ENCODE measurements at regions of chr10 and their contacts with region 1.

Region 1: DNA sequence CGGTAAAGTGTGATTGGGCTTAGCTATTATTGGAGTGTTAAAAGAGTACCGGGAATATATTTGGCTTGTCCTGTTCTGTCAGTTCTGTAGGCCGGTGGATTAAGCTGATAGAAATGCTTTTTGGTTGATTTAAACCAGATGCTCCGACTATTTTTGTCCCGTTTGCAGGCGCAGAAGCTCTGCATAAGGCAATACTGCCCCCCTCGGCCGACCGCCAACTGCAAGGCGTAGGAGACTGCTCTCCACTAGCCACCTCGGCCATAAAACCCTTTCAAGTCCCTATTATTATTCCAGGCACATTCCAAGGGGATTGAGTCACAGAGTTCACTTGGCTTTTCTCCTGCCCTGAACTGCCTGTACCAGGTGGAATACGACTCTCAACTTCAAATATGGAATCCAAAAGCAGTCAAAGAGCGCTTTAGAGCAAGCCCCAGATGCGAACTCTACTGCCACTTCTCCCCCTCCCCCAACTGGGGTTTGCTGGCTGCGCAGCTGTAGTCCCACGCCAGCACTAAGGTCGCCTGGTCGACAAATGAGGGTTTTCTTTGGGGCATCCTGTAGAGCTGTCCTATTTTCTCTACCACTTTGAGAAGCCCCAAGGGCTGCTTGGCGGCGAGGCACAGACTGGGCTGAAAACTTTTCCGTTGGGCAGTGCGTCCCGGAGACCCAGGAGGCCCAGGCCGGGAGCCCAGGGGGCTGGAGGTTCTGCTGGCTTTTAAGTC is 108.3 kb downstream of the REEP3 start:
- DNase-seq: peak; percentile 98
- H3K4me3 ChIP-seq: peak overlapping the region; percentile 63 to 76 (median 69)
- H3K27ac ChIP-seq: peak overlapping the region; percentile 95 to 99 (median 96)
- H3K4me1 ChIP-seq: peaks cover 29 to 37% (median 35%) of the 10 kb centered on the region in 4 donors
- H3K27me3 ChIP-seq: no peaks in the 10 kb centered on the region
- CTCF ChIP-seq: peak; percentile 67 to 75 (median 69)
- EP300 ChIP-seq: peak; percentile 53
- POLR2A ChIP-seq: no peak

Region 2: GRCh38 chr10:63217120-63217605 is 412.4 kb before region 1 on chr10:
- intact Hi-C with region 1: loop called (anchors 2 kb)
- DNase-seq: no peak
- H3K4me3 ChIP-seq: no peak overlapping the region
- H3K27ac ChIP-seq: no peak overlapping the region
- H3K4me1 ChIP-seq: peaks cover 16 to 45% (median 29%) of the 10 kb centered on the region in 4 donors
- H3K27me3 ChIP-seq: no peaks in the 10 kb centered on the region
- CTCF ChIP-seq: peak; percentile 67 to 76 (median 73)
- EP300 ChIP-seq: no peak
- POLR2A ChIP-seq: no peak

Region 3: GRCh38 chr10:63465293-63466143 is 164.0 kb before region 1 on chr10 and contains the start of gene JMJD1C:
- intact Hi-C with region 1: loop called (anchors 5 kb)
- DNase-seq: no peak
- H3K4me3 ChIP-seq: peak within 1 kb of the TSS; percentile 74 to 86 (median 83)
- H3K27ac ChIP-seq: peak within 1 kb of the TSS; percentile 88 to 94 (median 91)
- H3K4me1 ChIP-seq: peaks cover 13 to 30% (median 26%) of the 10 kb centered on the region in 4 donors
- H3K27me3 ChIP-seq: no peaks in the 10 kb centered on the region
- CTCF ChIP-seq: no peak
- EP300 ChIP-seq: no peak
- POLR2A ChIP-seq: peak; percentile 30
- total RNA-seq, gene JMJD1C: 60.3 to 89.7 (median 79.8) TPM

Region 4: GRCh38 chr10:63554657-63555056 is 74.9 kb before region 1 on chr10:
- intact Hi-C with region 1: no loop called
- DNase-seq: no peak
- H3K4me3 ChIP-seq: no peak overlapping the region
- H3K27ac ChIP-seq: no peak overlapping the region
- H3K4me1 ChIP-seq: peaks cover 0 to 16% (median 5%) of the 10 kb centered on the region in 4 donors
- H3K27me3 ChIP-seq: no peaks in the 10 kb centered on the region
- CTCF ChIP-seq: no peak
- EP300 ChIP-seq: no peak
- POLR2A ChIP-seq: no peak

Region 5: GRCh38 chr10:63699785-63700184 is 70.3 kb after region 1 on chr10:
- intact Hi-C with region 1: loop called (anchors 5 kb)
- DNase-seq: no peak
- H3K4me3 ChIP-seq: no peak overlapping the region
- H3K27ac ChIP-seq: peak overlapping the region; percentile 67 to 81 (median 78)
- H3K4me1 ChIP-seq: peaks cover 34 to 39% (median 37%) of the 10 kb centered on the region in 4 donors
- H3K27me3 ChIP-seq: no peaks in the 10 kb centered on the region
- CTCF ChIP-seq: no peak
- EP300 ChIP-seq: no peak
- POLR2A ChIP-seq: no peak

Measured in esophagus muscularis mucosa (tissue), 4 donors.